Lower leg skin (tissue), 4 donors: ENCODE measurements at regions of chr14 and their contacts with region 1.

Region 1: GRCh38 chr14:63392236-63392635 is 73.5 kb upstream of the GPHB5 start:
- DNase-seq: no peak
- H3K4me3 ChIP-seq: no peak overlapping the region
- CTCF ChIP-seq: no peak
- POLR2A ChIP-seq: no peak

Region 2: DNA sequence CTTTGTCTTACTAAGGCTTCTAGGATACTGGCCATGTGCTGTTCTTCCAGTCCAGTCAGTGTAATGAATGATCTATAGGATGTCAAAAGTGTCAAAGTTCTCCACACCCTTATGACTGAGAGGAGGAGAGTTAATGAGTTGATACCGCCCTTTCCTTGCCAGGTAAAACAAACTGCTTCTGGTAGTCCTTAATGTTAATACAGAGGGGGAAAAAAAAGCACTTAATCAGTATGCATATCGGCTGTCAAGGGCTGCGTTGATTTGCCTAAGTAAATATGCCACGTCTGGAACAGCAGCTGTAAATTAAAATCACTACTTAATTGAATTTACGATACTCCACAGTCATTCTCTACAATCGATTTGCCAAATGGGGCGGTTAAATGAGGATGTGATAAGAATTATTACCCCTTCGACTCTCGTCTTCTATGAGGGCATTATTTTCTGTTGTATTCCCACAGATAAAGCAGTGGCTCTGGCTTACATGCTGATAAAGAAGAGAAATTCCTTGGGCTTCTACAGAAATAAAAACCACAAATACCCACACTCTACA is 763.0 kb before region 1 on chr14:
- intact Hi-C with region 1: no loop called
- DNase-seq: no peak
- H3K4me3 ChIP-seq: no peak overlapping the region
- CTCF ChIP-seq: no peak
- POLR2A ChIP-seq: no peak

Region 3: GRCh38 chr14:63032076-63032475 is 360.2 kb before region 1 on chr14:
- intact Hi-C with region 1: no loop called
- DNase-seq: no peak
- H3K4me3 ChIP-seq: no peak overlapping the region
- CTCF ChIP-seq: no peak
- POLR2A ChIP-seq: no peak

Region 4: DNA sequence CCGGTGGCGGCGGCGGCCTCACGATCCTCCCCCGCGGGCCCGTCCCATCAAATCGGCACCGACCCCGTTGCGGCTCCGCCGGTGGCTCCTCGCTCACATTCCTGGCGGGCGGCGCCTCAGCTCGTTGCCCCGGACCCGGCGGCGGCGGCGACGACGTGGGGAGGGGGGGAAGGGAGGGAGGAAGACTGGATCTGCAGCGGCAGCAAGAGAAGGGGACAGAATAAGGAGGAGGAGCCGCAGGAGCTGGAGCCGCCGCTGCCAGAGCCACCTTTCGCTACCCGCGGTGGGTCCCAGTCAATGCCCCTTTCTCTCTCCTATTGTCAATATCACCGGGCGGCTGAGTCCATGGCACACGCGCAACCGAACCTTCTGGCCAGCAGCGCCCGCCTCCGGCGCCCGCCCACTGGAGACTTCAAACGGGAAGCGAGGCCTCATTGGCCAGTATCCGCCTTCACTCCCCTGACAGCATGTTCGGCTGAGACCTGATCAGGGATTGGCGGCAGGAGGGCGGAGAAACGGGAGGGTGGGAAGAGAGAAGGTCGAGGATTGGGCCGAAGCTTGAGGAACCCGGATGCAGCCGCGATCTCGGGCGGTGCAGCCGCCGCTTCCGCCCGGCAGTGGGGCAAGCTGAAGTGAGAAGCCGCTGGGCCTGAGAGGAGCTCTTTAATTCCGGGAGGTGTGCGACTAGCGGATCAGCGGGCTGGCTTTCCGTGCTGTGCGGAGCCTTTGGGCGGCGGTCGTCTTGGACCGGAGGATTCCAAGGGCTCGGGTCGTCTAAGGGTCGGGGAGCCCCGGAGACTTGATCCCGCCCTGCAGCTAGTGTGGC is 151.0 kb after region 1 on chr14 and contains the start of gene PPP2R5E:
- intact Hi-C with region 1: loop called (anchors 10 kb)
- DNase-seq: peak; percentile 99 to 100
- H3K4me3 ChIP-seq: peak within 1 kb of the TSS; percentile 92
- CTCF ChIP-seq: no peak
- POLR2A ChIP-seq: peak in 1 of 2 donors; percentile 33
- total RNA-seq, gene PPP2R5E: 15.0 to 22.5 (median 18.2) TPM